B cell (primary cell): ENCODE measurements at regions of chr6 and their contacts with region 1.

Region 1: GRCh38 chr6:46129629-46130511 is at the start of gene ENPP4:
- DNase-seq: peak; percentile 98
- ATAC-seq: peak; percentile 99
- H3K4me3 ChIP-seq: peak within 1 kb of the TSS; percentile 73 to 96 (median 80)
- H3K4me3 Mint-ChIP-seq: peak within 1 kb of the TSS; percentile 99
- H3K27ac ChIP-seq: peak within 1 kb of the TSS; percentile 72 to 78
- H3K27ac Mint-ChIP-seq: peak within 1 kb of the TSS; percentile 97
- H3K4me1 ChIP-seq: peaks cover 23 to 26% of the 10 kb centered on the region in 2 donors
- H3K4me1 Mint-ChIP-seq: peaks cover 45% of the 10 kb centered on the region
- H3K27me3 ChIP-seq: no peaks in the 10 kb centered on the region
- H3K27me3 Mint-ChIP-seq: no peaks in the 10 kb centered on the region
- CTCF ChIP-seq: no peak
- total RNA-seq, gene ENPP4: 10.0 and 10.1 TPM in 2 replicates

Region 2: DNA sequence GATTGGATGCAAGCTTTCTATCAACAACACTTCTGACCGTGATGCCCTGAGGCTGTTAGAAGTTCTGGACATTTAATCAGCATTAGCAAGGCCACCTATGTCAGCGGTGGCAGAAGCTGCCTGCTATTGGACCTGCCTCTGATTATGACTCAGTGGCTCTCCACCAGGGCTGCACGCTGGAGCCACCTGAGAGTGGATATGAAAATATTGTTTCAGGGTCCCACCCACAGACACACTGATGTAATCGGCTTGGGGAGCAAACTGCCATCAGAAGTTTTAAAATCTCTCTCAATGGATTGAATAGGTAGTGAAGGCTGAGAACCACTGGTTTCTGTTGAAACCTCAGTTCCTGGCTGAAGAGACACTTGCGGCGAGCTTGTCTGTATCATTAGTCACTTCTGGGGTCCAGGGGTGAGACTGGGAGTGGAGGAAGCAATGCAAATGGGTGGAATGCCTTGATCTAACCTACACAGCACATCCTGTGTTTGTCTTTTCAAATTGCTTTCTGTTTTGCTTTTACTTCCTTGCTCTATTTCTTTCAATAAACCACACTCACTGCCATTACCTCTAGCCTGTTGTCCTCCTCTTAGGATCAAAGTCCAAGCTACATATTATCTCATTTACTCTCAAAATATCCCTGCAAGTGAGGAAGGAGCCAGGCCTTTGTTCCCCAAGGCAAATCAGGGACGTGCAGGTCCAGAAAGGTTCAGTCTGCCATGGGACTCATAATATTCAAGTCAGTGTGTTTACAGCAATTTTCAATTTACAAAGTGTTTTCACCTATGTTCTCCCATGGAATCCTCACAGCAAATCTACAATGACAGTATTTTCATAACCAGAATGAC is 118.4 kb before region 1 on chr6:
- CTCF ChIA-PET with region 1: no interaction called
- POLR2A ChIA-PET with region 1: no interaction called
- intact Hi-C with region 1: loop called (anchors 5 kb)
- DNase-seq: peak; percentile 55
- ATAC-seq: peak; percentile 72
- H3K4me3 ChIP-seq: peak overlapping the region in 4 of 5 experiments; percentile 10 to 42 (median 23)
- H3K4me3 Mint-ChIP-seq: peak overlapping the region; percentile 69
- H3K27ac ChIP-seq: peak overlapping the region; percentile 63 to 64
- H3K27ac Mint-ChIP-seq: peak overlapping the region; percentile 88
- H3K4me1 ChIP-seq: peaks cover 30 to 36% of the 10 kb centered on the region in 2 donors
- H3K4me1 Mint-ChIP-seq: peaks cover 44% of the 10 kb centered on the region
- H3K27me3 ChIP-seq: peaks cover 0 to 10% (median under 1%) of the 10 kb centered on the region in 4 experiments
- H3K27me3 Mint-ChIP-seq: peaks cover 8% of the 10 kb centered on the region
- CTCF ChIP-seq: no peak

Region 3: GRCh38 chr6:46170357-46171289 is 40.8 kb after region 1 on chr6 and contains the start of gene ENPP5:
- CTCF ChIA-PET with region 1: no interaction called
- POLR2A ChIA-PET with region 1: no interaction called
- intact Hi-C with region 1: loop called (anchors 1 kb)
- DNase-seq: peak; percentile 76
- ATAC-seq: peak; percentile 98
- H3K4me3 ChIP-seq: peak within 1 kb of the TSS; percentile 38 to 63 (median 54)
- H3K4me3 Mint-ChIP-seq: peak within 1 kb of the TSS; percentile 86
- H3K27ac ChIP-seq: no peak within 1 kb of the TSS
- H3K27ac Mint-ChIP-seq: no peak within 1 kb of the TSS
- H3K4me1 ChIP-seq: peaks cover 16 to 17% of the 10 kb centered on the region in 2 donors
- H3K4me1 Mint-ChIP-seq: peaks cover 18% of the 10 kb centered on the region
- H3K27me3 ChIP-seq: peaks cover 0 to 14% (median 8%) of the 10 kb centered on the region in 4 experiments
- H3K27me3 Mint-ChIP-seq: peaks cover 11% of the 10 kb centered on the region
- CTCF ChIP-seq: no peak
- total RNA-seq, gene ENPP5: 0.68 and 1.0 TPM in 2 replicates

Region 4: GRCh38 chr6:46207174-46207573 is 77.3 kb after region 1 on chr6:
- CTCF ChIA-PET with region 1: no interaction called
- POLR2A ChIA-PET with region 1: no interaction called
- intact Hi-C with region 1: no loop called
- DNase-seq: no peak
- ATAC-seq: no peak
- H3K4me3 ChIP-seq: no peak overlapping the region
- H3K4me3 Mint-ChIP-seq: no peak overlapping the region
- H3K27ac ChIP-seq: no peak overlapping the region
- H3K27ac Mint-ChIP-seq: no peak overlapping the region
- H3K4me1 ChIP-seq: no peaks in the 10 kb centered on the region
- H3K4me1 Mint-ChIP-seq: no peaks in the 10 kb centered on the region
- H3K27me3 ChIP-seq: no peaks in the 10 kb centered on the region
- H3K27me3 Mint-ChIP-seq: no peaks in the 10 kb centered on the region
- CTCF ChIP-seq: no peak

Region 5: GRCh38 chr6:46410334-46410953 is 280.6 kb after region 1 on chr6:
- CTCF ChIA-PET with region 1: interaction called, 15 read pairs
- POLR2A ChIA-PET with region 1: no interaction called
- intact Hi-C with region 1: loop called (anchors 1 kb)
- DNase-seq: peak; percentile 74
- ATAC-seq: peak; percentile 43
- H3K4me3 ChIP-seq: no peak overlapping the region
- H3K4me3 Mint-ChIP-seq: no peak overlapping the region
- H3K27ac ChIP-seq: no peak overlapping the region
- H3K27ac Mint-ChIP-seq: no peak overlapping the region
- H3K4me1 ChIP-seq: no peaks in the 10 kb centered on the region
- H3K4me1 Mint-ChIP-seq: no peaks in the 10 kb centered on the region
- H3K27me3 ChIP-seq: no peaks in the 10 kb centered on the region
- H3K27me3 Mint-ChIP-seq: no peaks in the 10 kb centered on the region
- CTCF ChIP-seq: peak; percentile 97